Activated B cell treated with CpG ODN at 0.5 μM for 24 hours (primary cell): ENCODE measurements at regions of chr4 and their contacts with region 1.

Region 1: DNA sequence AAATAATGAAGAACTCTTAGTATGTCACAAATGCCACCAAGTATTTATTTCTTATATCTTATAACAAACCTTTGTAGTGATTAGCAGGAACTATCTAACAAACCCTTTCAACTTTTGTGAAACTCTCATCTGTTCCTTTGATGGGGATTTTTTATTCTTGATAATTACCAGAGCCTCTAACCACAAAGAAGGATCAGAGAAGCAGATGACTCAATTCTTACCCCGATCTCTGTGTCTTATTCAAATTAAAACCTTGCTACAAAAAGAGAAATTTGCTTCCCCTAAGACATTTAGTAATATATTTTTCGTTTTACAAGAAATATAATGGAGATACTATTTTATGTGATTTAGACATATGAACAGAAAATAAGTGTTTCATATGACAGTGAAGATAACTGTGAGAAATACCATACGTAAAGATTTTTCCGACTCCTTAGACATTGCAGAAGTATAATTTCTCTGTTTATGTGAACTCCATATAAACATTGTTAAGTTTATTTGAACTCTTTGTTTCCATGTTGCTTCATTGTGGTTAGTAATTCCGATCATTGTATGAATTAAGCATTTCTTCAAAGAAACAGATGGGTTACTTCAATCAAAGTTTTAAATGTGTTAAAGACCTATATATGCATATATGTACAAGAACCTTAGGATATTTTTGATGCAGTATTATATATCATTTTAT is 205.4 kb downstream of the CFAP299 start:
- DNase-seq: no peak
- ATAC-seq: peak; percentile 84
- H3K4me3 Mint-ChIP-seq: no peak overlapping the region
- H3K27ac Mint-ChIP-seq: no peak overlapping the region
- H3K4me1 Mint-ChIP-seq: peaks cover 13% of the 10 kb centered on the region
- H3K27me3 Mint-ChIP-seq: peaks cover 7% of the 10 kb centered on the region
- CTCF ChIP-seq: no peak

Region 2: GRCh38 chr4:80462621-80463091 is 78.3 kb before region 1 on chr4:
- CTCF ChIA-PET with region 1: no interaction called
- POLR2A ChIA-PET with region 1: no interaction called
- intact Hi-C with region 1: loop called (anchors 5 kb)
- DNase-seq: no peak
- ATAC-seq: peak; percentile 58
- H3K4me3 Mint-ChIP-seq: peak overlapping the region; percentile 69
- H3K27ac Mint-ChIP-seq: peak overlapping the region; percentile 33
- H3K4me1 Mint-ChIP-seq: peaks cover 11% of the 10 kb centered on the region
- H3K27me3 Mint-ChIP-seq: no peaks in the 10 kb centered on the region
- CTCF ChIP-seq: no peak

Region 3: DNA sequence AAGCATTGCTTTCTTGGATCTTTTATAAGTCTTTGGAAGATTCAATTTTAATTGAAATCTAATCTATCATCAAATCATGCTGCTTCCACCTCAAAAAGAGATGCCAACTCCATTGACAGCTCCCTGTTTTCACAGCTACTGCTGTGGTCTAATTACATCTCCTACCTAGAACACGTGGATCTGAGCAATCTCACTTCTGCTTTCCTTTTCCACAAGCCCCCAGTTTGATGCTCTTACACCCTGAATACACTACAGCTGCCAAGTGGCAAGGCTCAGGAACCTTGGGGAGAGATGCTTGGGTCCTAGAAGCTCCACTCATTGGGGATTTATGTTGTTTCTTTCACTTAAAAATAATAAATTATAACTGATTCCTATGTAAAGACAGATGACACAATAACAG is 33.4 kb before region 1 on chr4:
- CTCF ChIA-PET with region 1: no interaction called
- POLR2A ChIA-PET with region 1: no interaction called
- intact Hi-C with region 1: loop called (anchors 5 kb)
- DNase-seq: no peak
- ATAC-seq: peak; percentile 70
- H3K4me3 Mint-ChIP-seq: no peak overlapping the region
- H3K27ac Mint-ChIP-seq: no peak overlapping the region
- H3K4me1 Mint-ChIP-seq: peaks cover 13% of the 10 kb centered on the region
- H3K27me3 Mint-ChIP-seq: no peaks in the 10 kb centered on the region
- CTCF ChIP-seq: no peak

Region 4: GRCh38 chr4:80610845-80611677 is 70.1 kb after region 1 on chr4:
- CTCF ChIA-PET with region 1: no interaction called
- POLR2A ChIA-PET with region 1: no interaction called
- intact Hi-C with region 1: loop called (anchors 2 kb)
- DNase-seq: peak; percentile 15
- ATAC-seq: peak; percentile 76
- H3K4me3 Mint-ChIP-seq: peak overlapping the region; percentile 52
- H3K27ac Mint-ChIP-seq: peak overlapping the region; percentile 79
- H3K4me1 Mint-ChIP-seq: peaks cover 40% of the 10 kb centered on the region
- H3K27me3 Mint-ChIP-seq: no peaks in the 10 kb centered on the region
- CTCF ChIP-seq: no peak

Region 5: GRCh38 chr4:80637190-80637589 is 96.3 kb after region 1 on chr4:
- CTCF ChIA-PET with region 1: no interaction called
- POLR2A ChIA-PET with region 1: no interaction called
- intact Hi-C with region 1: no loop called
- DNase-seq: no peak
- ATAC-seq: no peak
- H3K4me3 Mint-ChIP-seq: no peak overlapping the region
- H3K27ac Mint-ChIP-seq: no peak overlapping the region
- H3K4me1 Mint-ChIP-seq: no peaks in the 10 kb centered on the region
- H3K27me3 Mint-ChIP-seq: no peaks in the 10 kb centered on the region
- CTCF ChIP-seq: no peak